Testis (tissue), 5 donors: ENCODE measurements at regions of chr14 and their contacts with region 1.

Region 1: GRCh38 chr14:69101331-69101826 is 51.5 kb downstream of the DCAF5 start:
- DNase-seq: peak; percentile 19
- H3K4me3 ChIP-seq: no peak overlapping the region
- H3K27ac ChIP-seq: no peak overlapping the region
- H3K4me1 ChIP-seq: peaks cover 1% of the 10 kb centered on the region
- H3K27me3 ChIP-seq: no peaks in the 10 kb centered on the region
- CTCF ChIP-seq: peak in 2 of 3 experiments; percentile 30 to 32
- POLR2A ChIP-seq: no peak

Region 2: DNA sequence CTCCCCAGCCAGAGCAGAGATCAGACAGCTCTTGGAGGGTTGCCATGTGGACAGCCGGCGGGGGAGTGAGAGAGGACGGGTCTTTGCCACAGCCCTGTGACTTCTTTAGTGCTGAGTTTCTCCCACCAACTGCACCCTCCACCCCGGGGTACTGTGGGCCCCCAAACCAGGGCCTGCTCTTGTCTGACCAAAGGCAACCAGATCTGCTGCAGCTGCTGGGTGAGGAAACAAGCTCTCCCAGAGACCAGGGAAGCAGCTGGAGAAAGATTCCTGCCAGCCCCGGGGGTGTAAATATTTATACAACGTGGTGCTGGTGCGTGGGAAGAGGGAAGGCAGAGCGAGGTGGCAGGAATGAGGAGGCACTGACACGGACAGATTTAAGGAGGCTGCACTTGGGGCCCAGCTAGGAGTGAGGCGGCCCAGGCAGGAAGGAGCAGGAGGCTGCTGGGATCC is 294.2 kb before region 1 on chr14:
- intact Hi-C with region 1: no loop called
- DNase-seq: peak; percentile 64
- H3K4me3 ChIP-seq: no peak overlapping the region
- H3K27ac ChIP-seq: peak overlapping the region; percentile 35 to 84
- H3K4me1 ChIP-seq: peaks cover 17% of the 10 kb centered on the region
- H3K27me3 ChIP-seq: no peaks in the 10 kb centered on the region
- CTCF ChIP-seq: no peak
- POLR2A ChIP-seq: no peak

Region 3: DNA sequence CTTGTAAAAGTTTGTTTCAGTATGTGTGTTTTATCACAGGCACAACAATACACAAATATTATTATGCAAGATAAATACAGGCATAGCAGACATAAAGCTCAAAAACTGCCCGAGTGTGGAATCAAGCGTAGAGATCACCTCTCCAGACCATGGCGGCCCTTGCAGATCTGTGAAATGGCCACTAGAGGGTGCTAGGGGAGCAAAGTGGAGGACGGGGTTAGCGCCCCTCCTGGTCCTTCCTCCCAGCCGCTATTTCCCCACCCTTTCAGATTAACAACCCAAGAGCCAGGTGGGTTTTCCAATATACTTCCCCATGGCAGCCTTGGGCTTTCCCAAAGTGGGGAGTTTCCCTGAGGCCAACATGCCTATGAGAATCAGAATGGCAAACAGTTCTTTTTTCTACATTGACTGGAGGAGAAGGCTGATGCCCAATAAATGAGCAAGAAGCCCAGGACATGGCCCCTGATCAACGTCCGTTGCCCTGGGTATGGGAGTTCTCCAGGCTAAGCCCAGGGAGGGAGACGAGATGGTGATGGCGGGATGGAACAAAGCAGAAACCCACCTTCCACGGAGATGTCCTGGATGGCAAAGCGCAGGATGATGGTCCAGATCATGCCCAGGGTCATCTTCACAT is 189.7 kb before region 1 on chr14:
- intact Hi-C with region 1: loop called (anchors 5 kb)
- DNase-seq: peak; percentile 75
- H3K4me3 ChIP-seq: no peak overlapping the region
- H3K27ac ChIP-seq: no peak overlapping the region
- H3K4me1 ChIP-seq: no peaks in the 10 kb centered on the region
- H3K27me3 ChIP-seq: no peaks in the 10 kb centered on the region
- CTCF ChIP-seq: peak; percentile 89 to 94 (median 93)
- POLR2A ChIP-seq: no peak

Region 4: DNA sequence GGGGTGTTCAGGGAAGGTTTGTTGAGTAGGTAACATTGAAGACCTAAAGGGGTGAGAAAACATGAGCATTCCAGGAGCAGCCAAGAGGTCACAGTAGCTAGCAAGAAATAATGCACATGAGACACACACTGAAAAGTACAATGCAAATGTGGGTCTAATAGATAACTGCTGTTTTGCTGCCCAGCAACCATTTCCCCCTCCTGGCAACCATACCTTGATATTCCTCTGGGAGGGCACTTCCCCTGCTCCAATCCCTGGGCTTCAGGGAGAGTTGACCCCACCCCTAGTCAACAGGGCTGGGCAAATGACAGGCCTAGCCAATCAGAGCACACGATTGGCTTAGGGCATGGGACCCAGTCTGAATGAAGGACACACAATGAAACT is 113.7 kb before region 1 on chr14:
- intact Hi-C with region 1: no loop called
- DNase-seq: no peak
- H3K4me3 ChIP-seq: no peak overlapping the region
- H3K27ac ChIP-seq: no peak overlapping the region
- H3K4me1 ChIP-seq: peaks cover 18% of the 10 kb centered on the region
- H3K27me3 ChIP-seq: no peaks in the 10 kb centered on the region
- CTCF ChIP-seq: no peak
- POLR2A ChIP-seq: no peak

Region 5: GRCh38 chr14:69156224-69156623 is 54.8 kb after region 1 on chr14:
- intact Hi-C with region 1: no loop called
- DNase-seq: no peak
- H3K4me3 ChIP-seq: no peak overlapping the region
- H3K27ac ChIP-seq: no peak overlapping the region
- H3K4me1 ChIP-seq: peaks cover 10% of the 10 kb centered on the region
- H3K27me3 ChIP-seq: no peaks in the 10 kb centered on the region
- CTCF ChIP-seq: no peak
- POLR2A ChIP-seq: no peak

Region 6: GRCh38 chr14:69214393-69214792 is 113.0 kb after region 1 on chr14:
- intact Hi-C with region 1: no loop called
- DNase-seq: no peak
- H3K4me3 ChIP-seq: no peak overlapping the region
- H3K27ac ChIP-seq: no peak overlapping the region
- H3K4me1 ChIP-seq: no peaks in the 10 kb centered on the region
- H3K27me3 ChIP-seq: no peaks in the 10 kb centered on the region
- CTCF ChIP-seq: no peak
- POLR2A ChIP-seq: no peak